WTC11 (cell line): ENCODE measurements at regions of chr7 and their contacts with region 1.

Region 1: GRCh38 chr7:122689346-122690109 is 9.4 kb downstream of the RNF133 start:
- DNase-seq: no peak
- ATAC-seq: peak; percentile 21
- H3K4me3 Mint-ChIP-seq: no peak overlapping the region
- H3K27ac Mint-ChIP-seq: no peak overlapping the region
- H3K4me1 Mint-ChIP-seq: peaks cover 27% of the 10 kb centered on the region
- H3K27me3 Mint-ChIP-seq: no peaks in the 10 kb centered on the region
- CTCF ChIP-seq: no peak

Region 2: DNA sequence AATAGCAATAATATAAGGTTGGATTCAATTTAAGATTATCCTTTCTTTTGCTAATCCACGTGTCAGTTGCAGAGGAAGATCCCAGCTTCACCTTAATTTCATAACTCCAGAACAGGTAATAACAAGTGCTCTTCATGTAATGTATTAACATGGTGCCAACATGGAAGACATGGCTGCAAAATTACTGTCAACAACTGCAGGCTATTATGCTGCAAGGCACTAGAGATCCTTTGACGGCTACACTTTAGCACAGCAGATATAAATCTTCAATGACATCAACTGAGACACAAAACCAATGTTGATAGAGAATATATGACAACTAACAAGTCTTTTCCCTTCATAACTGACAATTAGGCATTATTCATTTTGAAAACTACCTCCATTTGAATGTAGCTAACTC is 86.7 kb before region 1 on chr7:
- CTCF ChIA-PET with region 1: no interaction called
- POLR2A ChIA-PET with region 1: no interaction called
- DNase-seq: no peak
- ATAC-seq: no peak
- H3K4me3 Mint-ChIP-seq: no peak overlapping the region
- H3K27ac Mint-ChIP-seq: no peak overlapping the region; the same call in 1 of the 2 replicates
- H3K4me1 Mint-ChIP-seq: peaks cover 4% of the 10 kb centered on the region
- H3K27me3 Mint-ChIP-seq: no peaks in the 10 kb centered on the region
- CTCF ChIP-seq: no peak

Region 3: DNA sequence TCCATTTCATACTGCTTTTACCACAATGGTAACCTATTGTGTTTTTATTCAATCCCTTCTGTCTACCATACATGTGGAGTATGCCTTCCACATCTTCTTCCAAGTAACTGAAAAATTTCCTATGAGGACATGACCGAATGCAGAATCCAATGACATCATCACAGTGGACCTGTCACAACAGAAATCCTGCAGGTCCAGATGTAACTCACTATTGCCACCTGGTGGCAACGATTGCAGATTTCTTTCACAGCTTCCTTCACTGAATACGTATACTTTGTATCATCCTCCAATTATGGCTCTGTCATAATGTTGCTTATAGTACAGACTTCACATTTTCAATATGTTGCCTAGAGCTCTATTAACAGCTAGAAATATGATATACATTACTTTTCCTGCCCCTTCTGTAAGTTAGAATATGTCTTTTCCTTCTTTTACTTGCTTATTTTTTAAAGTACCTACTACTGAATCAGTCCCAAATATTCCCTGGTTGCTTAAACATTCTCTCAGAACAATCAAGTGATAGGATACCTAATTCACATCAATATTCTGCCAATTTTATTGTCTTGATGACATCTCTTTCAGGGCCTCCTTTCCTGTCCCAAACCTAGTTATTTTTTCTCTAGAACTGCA is 464.8 kb after region 1 on chr7:
- CTCF ChIA-PET with region 1: interaction called, 10 read pairs
- POLR2A ChIA-PET with region 1: no interaction called
- DNase-seq: peak; percentile 77
- ATAC-seq: peak; percentile 83
- H3K4me3 Mint-ChIP-seq: no peak overlapping the region
- H3K27ac Mint-ChIP-seq: no peak overlapping the region
- H3K4me1 Mint-ChIP-seq: no peaks in the 10 kb centered on the region
- H3K27me3 Mint-ChIP-seq: no peaks in the 10 kb centered on the region
- CTCF ChIP-seq: peak; percentile 75